ENCODE measurements at regions of chr4 and their contacts with region 1.

Region 1: DNA sequence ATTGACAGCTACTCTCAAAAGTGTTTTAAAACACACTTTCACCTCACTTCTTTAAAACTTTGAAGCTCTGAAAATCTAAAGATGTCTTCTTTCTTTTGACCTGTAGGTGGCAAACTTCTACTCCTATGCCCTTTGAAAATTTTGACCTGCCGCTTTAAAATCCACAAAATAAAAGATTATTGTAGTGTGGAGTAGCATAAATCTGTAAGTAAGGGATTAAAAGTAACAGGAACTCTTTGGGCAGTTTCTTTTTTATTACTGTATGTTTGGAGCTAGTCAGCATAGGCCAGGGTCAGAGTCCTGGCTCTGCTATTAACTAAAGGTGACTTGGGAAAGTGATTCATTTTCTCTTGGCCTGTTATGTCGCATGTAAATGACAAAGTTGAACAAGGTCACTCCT is 25.5 kb downstream of the BBS12 start:
- DNase-seq: peak; percentile 65
- H3K4me3 ChIP-seq: no peak overlapping the region
- H3K27ac ChIP-seq: no peak overlapping the region
- H3K4me1 ChIP-seq: peaks cover 3% of the 10 kb centered on the region
- H3K27me3 ChIP-seq: no peaks in the 10 kb centered on the region
- CTCF ChIP-seq: peak; percentile 28 to 35
- POLR2A ChIP-seq: no peak

Region 2: GRCh38 chr4:122602277-122603142 is 155.5 kb before region 1 on chr4:
- CTCF ChIA-PET with region 1: interaction called, 20 read pairs
- POLR2A ChIA-PET with region 1: no interaction called
- dilution Hi-C with region 1: no loop called
- intact Hi-C with region 1: loop called (anchors 1 kb)
- DNase-seq: peak; percentile 58
- H3K4me3 ChIP-seq: no peak overlapping the region
- H3K27ac ChIP-seq: no peak overlapping the region
- H3K4me1 ChIP-seq: no peaks in the 10 kb centered on the region
- H3K27me3 ChIP-seq: peaks cover 10 to 14% of the 10 kb centered on the region in 2 experiments
- CTCF ChIP-seq: peak; percentile 15 to 16
- POLR2A ChIP-seq: no peak

Region 3: DNA sequence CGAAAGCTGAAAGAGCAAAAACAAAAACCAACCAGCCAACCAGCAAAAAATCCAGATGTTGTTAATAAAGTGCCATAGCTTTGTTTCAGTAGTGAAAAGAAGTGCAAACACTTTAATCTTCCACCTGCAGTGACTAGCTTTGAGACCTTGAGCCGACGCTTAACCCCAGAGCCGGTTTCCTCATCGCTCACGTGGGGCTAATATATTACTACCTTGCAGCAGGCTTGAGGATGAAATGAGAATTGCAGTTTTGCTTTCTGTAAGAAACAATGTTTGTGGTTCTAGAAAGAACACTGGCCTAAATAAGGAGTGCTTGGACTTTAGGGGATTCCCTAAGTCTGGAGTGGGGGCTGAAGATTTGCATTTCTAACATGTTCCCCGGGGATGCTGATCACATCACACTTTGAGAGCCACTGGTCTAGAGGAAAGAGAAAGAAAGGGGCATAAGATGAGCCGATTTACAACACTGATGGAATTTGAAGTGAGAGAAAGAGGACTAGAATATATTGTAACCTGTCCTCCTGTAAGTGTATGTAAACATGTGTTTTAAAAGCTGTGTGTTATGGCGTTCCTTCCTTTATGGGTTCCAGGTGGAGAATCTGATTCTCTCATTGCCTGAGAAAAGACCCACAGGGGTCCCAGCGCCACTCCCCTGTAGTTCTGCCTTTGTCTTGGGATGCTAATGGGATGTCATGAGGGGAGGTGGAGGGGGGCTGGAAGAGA is 70.0 kb after region 1 on chr4:
- CTCF ChIA-PET with region 1: interaction called, 13 read pairs
- POLR2A ChIA-PET with region 1: no interaction called
- dilution Hi-C with region 1: no loop called
- intact Hi-C with region 1: no loop called
- DNase-seq: peak; percentile 71
- H3K4me3 ChIP-seq: peak overlapping the region; percentile 74 to 86 (median 75)
- H3K27ac ChIP-seq: peak overlapping the region; percentile 2
- H3K4me1 ChIP-seq: peaks cover 8% of the 10 kb centered on the region
- H3K27me3 ChIP-seq: no peaks in the 10 kb centered on the region
- CTCF ChIP-seq: no peak
- POLR2A ChIP-seq: no peak

Region 4: GRCh38 chr4:122854447-122855352 is 96.7 kb after region 1 on chr4:
- CTCF ChIA-PET with region 1: interaction called, 12 read pairs
- POLR2A ChIA-PET with region 1: no interaction called
- dilution Hi-C with region 1: no loop called
- intact Hi-C with region 1: no loop called
- DNase-seq: no peak
- H3K4me3 ChIP-seq: no peak overlapping the region
- H3K27ac ChIP-seq: no peak overlapping the region
- H3K4me1 ChIP-seq: peaks cover 7% of the 10 kb centered on the region
- H3K27me3 ChIP-seq: no peaks in the 10 kb centered on the region
- CTCF ChIP-seq: no peak
- POLR2A ChIP-seq: no peak

Region 5: DNA sequence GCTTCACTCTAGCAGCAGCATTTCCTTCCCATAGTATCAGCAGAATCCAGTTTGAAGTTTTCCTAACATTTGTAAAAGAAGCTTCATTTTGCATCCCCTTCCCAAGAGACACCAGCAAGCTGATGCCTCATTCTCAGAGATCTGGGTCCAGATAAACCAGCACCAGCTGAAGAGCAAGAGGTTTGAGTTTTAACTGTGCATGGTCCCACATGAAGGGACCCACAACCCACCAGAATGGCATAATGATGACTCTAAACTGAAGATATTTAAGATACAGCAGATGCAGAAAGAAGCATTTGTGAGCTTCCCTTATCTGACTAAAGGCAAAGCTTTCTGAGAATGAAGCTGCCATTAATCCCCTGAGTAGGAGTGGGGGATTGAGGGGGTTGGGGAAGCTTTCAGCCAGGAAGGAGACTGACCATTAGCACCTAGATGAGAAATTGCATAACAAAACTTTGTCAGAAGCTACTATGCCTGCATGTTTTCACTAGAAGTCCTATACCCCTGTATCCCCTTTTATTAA is 145.8 kb after region 1 on chr4:
- CTCF ChIA-PET with region 1: interaction called, 11 read pairs
- POLR2A ChIA-PET with region 1: no interaction called
- dilution Hi-C with region 1: loop called (anchors 25 kb)
- intact Hi-C with region 1: no loop called
- DNase-seq: no peak
- H3K4me3 ChIP-seq: no peak overlapping the region
- H3K27ac ChIP-seq: no peak overlapping the region
- H3K4me1 ChIP-seq: peaks cover under 1% of the 10 kb centered on the region
- H3K27me3 ChIP-seq: no peaks in the 10 kb centered on the region
- CTCF ChIP-seq: no peak
- POLR2A ChIP-seq: no peak

Region 6: DNA sequence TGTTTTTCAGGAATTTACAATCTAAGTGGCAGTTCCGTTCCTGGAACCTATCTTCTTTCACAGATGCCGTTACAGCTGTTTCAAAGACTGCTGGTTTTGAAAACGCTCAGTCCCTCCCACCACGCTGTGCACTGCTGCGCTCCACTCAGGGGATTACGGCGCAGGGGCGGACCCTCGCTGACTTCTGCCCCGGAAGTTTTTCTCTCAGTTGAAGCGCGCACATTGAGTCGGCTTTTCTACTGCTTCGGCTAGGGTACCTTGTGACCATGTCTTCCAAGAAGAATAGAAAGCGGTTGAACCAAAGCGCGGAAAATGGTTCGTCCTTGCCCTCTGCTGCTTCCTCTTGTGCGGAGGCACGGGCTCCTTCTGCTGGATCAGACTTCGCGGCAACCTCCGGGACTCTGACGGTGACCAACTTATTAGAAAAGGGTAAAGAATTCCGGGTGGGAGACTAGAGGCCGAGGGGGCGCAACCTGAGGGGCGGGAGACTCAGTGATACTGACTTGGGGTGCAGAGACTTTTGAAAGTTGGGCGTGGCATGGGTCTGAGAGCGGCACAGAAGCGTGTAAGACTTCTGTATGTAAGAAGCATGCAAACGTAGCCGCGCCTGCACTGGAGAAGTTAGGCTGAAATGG is 165.0 kb after region 1 on chr4:
- CTCF ChIA-PET with region 1: interaction called, 48 read pairs
- POLR2A ChIA-PET with region 1: interaction called, 3 read pairs
- dilution Hi-C with region 1: loop called (anchors 25 kb)
- intact Hi-C with region 1: loop called (anchors 2 kb)
- DNase-seq: peak; percentile 92
- H3K4me3 ChIP-seq: peak overlapping the region; percentile 75 to 90 (median 81)
- H3K27ac ChIP-seq: peak overlapping the region; percentile 26
- H3K4me1 ChIP-seq: peaks cover 18% of the 10 kb centered on the region
- H3K27me3 ChIP-seq: no peaks in the 10 kb centered on the region
- CTCF ChIP-seq: no peak
- POLR2A ChIP-seq: peak; percentile 41

Region 7: GRCh38 chr4:122963216-122963615 is 205.2 kb after region 1 on chr4:
- CTCF ChIA-PET with region 1: no interaction called
- POLR2A ChIA-PET with region 1: no interaction called
- dilution Hi-C with region 1: no loop called
- intact Hi-C with region 1: no loop called
- DNase-seq: no peak
- H3K4me3 ChIP-seq: no peak overlapping the region
- H3K27ac ChIP-seq: no peak overlapping the region
- H3K4me1 ChIP-seq: no peaks in the 10 kb centered on the region
- H3K27me3 ChIP-seq: no peaks in the 10 kb centered on the region
- CTCF ChIP-seq: no peak
- POLR2A ChIP-seq: no peak

Region 8: GRCh38 chr4:122980860-122981259 is 222.8 kb after region 1 on chr4:
- CTCF ChIA-PET with region 1: no interaction called
- POLR2A ChIA-PET with region 1: no interaction called
- dilution Hi-C with region 1: no loop called
- intact Hi-C with region 1: no loop called
- DNase-seq: peak; percentile 35
- H3K4me3 ChIP-seq: no peak overlapping the region
- H3K27ac ChIP-seq: no peak overlapping the region
- H3K4me1 ChIP-seq: no peaks in the 10 kb centered on the region
- H3K27me3 ChIP-seq: no peaks in the 10 kb centered on the region
- CTCF ChIP-seq: no peak
- POLR2A ChIP-seq: no peak

Region 9: DNA sequence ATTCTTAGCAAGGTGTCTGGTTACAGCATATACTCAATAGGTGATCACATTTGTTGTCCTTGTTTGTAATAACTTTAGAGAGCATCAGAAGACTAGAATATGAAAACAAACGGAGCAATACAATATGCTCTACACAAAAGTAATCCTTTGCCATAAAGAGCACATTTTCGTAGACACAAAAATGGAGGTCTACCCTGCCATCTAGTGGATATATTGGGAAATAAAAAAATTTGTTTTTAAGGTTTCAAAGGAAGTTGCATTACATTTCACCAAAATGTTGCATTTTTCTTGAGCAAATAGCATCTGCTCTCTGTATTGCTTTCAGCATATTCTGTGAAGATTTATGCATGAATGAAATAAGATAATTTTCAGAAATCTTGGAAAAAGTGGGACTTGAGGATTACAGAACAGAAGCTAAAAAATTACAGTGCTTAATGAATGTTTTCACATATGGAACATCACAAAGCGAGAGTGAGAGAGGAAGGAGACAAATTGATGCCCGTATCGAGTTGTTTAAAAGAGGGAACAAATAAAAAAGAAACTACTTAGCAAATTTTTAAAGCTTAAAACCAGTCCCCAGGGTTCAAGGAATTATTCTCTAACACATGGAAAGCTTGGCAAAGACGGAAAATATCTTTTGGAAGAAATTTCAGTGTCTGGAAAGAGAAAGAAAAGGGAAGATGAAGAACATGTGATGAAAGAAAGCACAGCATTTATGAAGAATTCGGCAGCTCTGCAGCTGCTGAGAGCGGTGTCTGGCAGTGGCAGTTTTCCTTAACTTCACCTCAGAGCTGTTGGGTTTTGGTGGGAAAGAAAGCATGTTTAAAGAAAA is 1564.4 kb after region 1 on chr4:
- CTCF ChIA-PET with region 1: no interaction called
- POLR2A ChIA-PET with region 1: no interaction called
- dilution Hi-C with region 1: no loop called
- intact Hi-C with region 1: loop called (anchors 5 kb)
- DNase-seq: peak; percentile 56
- H3K4me3 ChIP-seq: no peak overlapping the region
- H3K27ac ChIP-seq: no peak overlapping the region
- H3K4me1 ChIP-seq: no peaks in the 10 kb centered on the region
- H3K27me3 ChIP-seq: no peaks in the 10 kb centered on the region
- CTCF ChIP-seq: peak; percentile 14 to 25
- POLR2A ChIP-seq: no peak